Pancreas (tissue), 10 donors: ENCODE measurements at regions of chr5 and their contacts with region 1.

Region 1: GRCh38 chr5:149024943-149025342 is 37.9 kb downstream of the SH3TC2 start:
- DNase-seq: no peak
- ATAC-seq: no peak
- H3K4me3 ChIP-seq: no peak overlapping the region
- H3K27ac ChIP-seq: no peak overlapping the region
- H3K4me1 ChIP-seq: no peaks in the 10 kb centered on the region
- H3K27me3 ChIP-seq: peaks cover 0 to 5% (median 0%) of the 10 kb centered on the region in 4 donors
- CTCF ChIP-seq: no peak

Region 2: DNA sequence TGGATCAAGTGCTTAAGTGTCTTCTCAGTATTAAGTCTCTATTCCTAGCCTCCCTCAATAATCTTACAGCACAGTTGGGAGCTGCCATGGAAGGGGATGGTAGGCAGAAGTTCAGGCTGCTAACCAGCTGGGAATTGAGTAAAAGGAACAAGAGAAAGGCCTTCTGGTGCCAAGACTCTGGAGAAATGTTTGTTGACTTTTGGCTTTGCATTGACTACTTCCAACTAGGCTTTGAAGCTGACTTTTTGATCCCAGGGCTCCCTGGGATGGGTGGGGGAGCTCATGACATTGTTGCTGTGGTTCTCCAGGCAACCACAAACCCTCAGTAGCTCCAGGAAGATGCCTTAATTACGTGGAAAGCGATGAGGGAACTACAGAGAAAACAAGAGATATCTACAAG is 285.4 kb before region 1 on chr5:
- intact Hi-C with region 1: loop called in 2 of 3 experiments (anchors 5 to 10 kb)
- DNase-seq: no peak
- ATAC-seq: peak; percentile 21 to 67 (median 46)
- H3K4me3 ChIP-seq: no peak overlapping the region
- H3K27ac ChIP-seq: peak overlapping the region in 2 of 4 donors; percentile 44 to 69
- H3K4me1 ChIP-seq: peaks cover 0 to 16% (median 7%) of the 10 kb centered on the region in 3 donors
- H3K27me3 ChIP-seq: no peaks in the 10 kb centered on the region
- CTCF ChIP-seq: no peak

Region 3: GRCh38 chr5:148972958-148973357 is 52.0 kb before region 1 on chr5:
- intact Hi-C with region 1: no loop called
- DNase-seq: no peak
- ATAC-seq: peak in 3 of 4 donors; percentile 19 to 74 (median 31)
- H3K4me3 ChIP-seq: no peak overlapping the region
- H3K27ac ChIP-seq: no peak overlapping the region
- H3K4me1 ChIP-seq: peaks cover 0 to 7% (median 0%) of the 10 kb centered on the region in 3 donors
- H3K27me3 ChIP-seq: no peaks in the 10 kb centered on the region
- CTCF ChIP-seq: no peak

Region 4: DNA sequence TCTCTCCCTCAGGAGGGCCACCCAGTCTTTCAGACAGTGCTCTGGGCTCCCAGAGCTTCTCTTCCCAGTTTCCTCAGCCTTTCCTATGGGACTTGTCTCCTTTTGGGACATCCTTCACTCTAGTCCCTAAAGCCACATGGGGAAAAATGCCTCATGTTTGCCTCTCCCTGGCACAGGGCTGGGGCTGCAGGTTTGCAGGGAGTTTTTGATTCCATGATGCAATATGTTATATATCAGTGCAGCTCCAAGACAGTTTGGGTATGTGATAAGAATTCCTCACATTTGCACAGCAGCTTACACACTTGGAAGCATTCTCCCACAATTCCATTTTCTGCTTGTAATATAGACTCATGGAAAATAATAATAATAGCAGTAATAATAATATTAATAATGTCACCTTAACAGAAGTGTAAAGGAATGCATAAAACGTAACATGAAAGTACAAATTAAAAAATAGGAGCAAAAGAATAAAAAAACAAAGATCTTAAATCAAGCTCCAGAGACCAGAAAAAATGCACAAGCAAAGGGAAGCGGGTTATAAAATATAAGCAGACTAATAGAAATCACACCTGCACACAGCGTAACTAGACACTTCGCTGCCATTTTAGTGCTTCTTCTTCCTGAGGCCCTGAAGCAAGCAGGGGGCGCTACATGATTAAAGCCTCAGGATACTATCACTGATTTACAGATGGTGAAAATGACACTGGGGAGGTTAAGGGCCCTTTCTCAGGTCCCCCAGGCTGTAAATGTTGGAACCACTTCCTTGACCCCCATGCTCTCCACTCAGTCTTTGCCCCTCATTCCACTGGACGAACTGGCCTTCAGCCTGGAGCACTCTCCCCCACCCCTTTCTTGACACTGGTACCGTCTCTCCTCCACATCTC is 424.1 kb after region 1 on chr5:
- intact Hi-C with region 1: no loop called
- DNase-seq: no peak
- ATAC-seq: peak in 1 of 4 donors; percentile 24
- H3K4me3 ChIP-seq: no peak overlapping the region
- H3K27ac ChIP-seq: no peak overlapping the region
- H3K4me1 ChIP-seq: peaks cover 3 to 19% (median 11%) of the 10 kb centered on the region in 3 donors
- H3K27me3 ChIP-seq: no peaks in the 10 kb centered on the region
- CTCF ChIP-seq: no peak